Heart left ventricle (tissue), 16 donors: ENCODE measurements at regions of chr11 and their contacts with region 1.

Region 1: DNA sequence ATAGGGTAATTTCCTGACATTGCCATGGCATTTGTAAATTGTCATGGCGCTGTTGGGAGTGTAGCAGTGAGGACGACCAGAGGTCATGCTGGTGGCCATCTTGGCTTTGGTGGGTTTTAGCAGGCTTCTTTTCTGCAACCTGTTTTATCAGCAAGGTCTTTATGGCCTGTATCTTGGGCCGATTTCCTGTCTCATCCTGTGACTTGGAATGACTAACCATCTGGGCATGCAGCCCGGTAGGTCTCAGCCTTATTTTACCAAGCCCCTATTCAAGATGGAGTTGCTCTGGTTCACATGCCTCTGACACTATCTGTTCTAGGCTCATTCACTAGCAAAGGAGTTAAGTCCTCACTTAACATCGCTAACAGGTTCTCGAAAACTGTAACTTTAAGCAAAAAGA is 1374.2 kb downstream of the FAM181B start:
- DNase-seq: no peak
- ATAC-seq: no peak
- H3K4me3 ChIP-seq: no peak overlapping the region
- H3K27ac ChIP-seq: no peak overlapping the region
- H3K4me1 ChIP-seq: no peaks in the 10 kb centered on the region
- H3K27me3 ChIP-seq: no peaks in the 10 kb centered on the region
- CTCF ChIP-seq: no peak
- POLR2A ChIP-seq: no peak

Region 2: DNA sequence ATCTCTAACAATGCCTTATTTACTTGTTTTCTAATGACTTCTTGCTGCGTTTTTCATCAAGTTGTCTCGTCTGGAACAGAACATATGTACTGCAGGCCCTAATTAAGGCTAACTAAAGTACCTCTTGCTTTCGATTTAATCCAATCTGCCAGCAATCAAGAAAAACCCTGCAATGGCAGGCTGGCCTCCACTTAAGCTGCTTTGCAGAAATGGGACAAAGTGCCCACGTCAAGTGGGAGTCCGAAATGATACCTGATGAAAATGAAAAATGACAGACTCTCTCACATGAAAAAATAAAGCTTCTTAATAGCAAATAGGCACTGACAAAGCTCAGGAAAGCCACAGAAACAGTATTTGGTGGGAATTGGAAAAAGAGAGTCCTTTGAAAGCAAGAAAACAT is 80.5 kb before region 1 on chr11:
- intact Hi-C with region 1: no loop called
- DNase-seq: no peak
- ATAC-seq: no peak
- H3K4me3 ChIP-seq: no peak overlapping the region
- H3K27ac ChIP-seq: no peak overlapping the region
- H3K4me1 ChIP-seq: no peaks in the 10 kb centered on the region
- H3K27me3 ChIP-seq: no peaks in the 10 kb centered on the region
- CTCF ChIP-seq: no peak
- POLR2A ChIP-seq: no peak

Region 3: DNA sequence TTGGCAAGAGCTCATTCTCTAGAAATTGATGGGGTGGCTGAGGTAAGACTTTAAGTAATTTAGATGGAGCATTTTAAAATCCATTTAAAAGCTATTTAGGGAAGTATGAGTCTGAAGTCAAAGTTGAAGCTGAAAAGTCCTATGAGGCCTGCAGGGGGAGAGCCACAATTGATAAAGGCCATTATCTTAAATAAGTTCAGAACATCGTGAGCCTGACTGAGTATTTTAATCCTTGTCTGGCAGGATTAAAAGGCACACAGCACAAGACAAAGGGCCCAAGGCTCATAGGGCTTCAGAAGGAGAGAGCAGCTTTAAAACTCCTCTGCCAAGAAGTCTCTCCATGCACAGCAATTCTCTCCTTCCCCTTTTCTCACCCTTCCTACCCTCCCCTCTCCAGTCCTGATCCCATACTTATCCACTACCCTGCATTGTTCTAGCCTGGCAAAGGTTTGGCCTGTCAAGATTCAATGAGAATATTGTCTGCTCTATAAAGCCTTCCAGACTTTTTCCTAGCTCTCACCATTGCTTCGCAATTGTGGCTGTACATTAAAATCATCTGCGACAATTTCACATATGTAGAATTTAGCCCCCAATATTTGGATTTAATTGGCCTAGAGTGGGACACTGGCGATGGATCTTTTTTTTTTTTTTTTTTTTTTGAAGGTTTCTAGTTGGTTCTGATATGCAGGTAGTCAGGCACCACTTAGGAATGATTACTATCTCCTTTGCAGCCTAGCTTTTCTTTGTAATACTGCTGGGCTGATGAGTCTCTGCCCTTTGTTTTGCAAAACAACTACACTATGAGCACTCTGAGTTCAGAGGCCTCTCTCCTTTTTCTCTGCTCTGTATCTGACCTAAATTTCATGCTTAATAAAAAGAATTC is 61.4 kb after region 1 on chr11:
- intact Hi-C with region 1: loop called in 1 of 10 experiments (anchors 10 kb)
- DNase-seq: no peak
- ATAC-seq: peak in 2 of 4 donors; percentile 53 to 61
- H3K4me3 ChIP-seq: no peak overlapping the region
- H3K27ac ChIP-seq: no peak overlapping the region
- H3K4me1 ChIP-seq: peaks cover 0 to 3% (median 0%) of the 10 kb centered on the region in 12 donors
- H3K27me3 ChIP-seq: no peaks in the 10 kb centered on the region
- CTCF ChIP-seq: peak in 2 of 12 donors; percentile 11 to 30
- POLR2A ChIP-seq: no peak